CD4-positive, alpha-beta memory T cell (primary cell): ENCODE measurements at regions of chr15 and their contacts with region 1.

Region 1: DNA sequence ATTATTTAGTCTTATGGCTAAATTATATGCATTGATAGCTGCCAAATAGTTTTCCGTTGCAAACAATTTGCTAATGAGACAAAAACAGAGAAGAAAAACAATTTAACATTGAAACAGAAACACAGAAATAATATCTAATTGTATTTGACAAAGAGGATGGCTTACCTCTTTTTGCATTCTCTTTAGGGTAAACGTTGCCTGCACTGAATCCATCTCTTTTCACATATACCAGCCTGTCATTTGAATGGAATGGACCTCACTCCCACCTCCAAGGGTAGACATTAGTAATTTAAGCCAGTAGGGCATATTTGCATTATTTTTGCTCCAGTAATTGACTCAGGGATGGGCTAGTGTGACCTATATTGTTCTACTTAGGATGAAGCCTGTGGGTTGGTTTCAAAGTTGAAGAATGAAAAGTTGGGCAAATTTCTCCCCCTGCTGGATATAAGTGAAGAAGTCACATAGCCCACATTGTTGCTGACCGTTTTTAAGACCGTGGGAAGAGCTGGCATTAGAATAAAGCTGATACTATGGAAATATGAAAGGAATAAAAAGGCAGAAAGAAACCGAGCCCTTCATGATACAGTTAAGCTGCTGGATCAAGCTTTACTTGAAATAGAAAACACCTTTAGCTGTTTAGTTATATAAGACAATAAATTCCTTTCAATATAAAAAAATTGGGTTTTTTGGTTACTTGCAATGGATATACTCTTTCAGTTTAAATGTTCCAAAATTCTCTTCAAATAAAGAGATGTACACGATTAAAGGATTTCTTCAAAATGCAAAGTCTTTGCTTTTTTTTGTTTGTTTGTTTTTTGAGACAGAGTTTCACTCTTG is 26.9 kb downstream of the PIERCE2 start:
- DNase-seq: peak in 4 of 5 donors; percentile 23 to 36 (median 30)
- H3K4me3 ChIP-seq: no peak overlapping the region
- H3K4me3 Mint-ChIP-seq: no peak overlapping the region
- H3K27ac ChIP-seq: no peak overlapping the region
- H3K27ac Mint-ChIP-seq: no peak overlapping the region
- H3K4me1 ChIP-seq: peaks cover 4% of the 10 kb centered on the region
- H3K4me1 Mint-ChIP-seq: peaks cover 3 to 7% (median 5%) of the 10 kb centered on the region in 4 donors
- H3K27me3 ChIP-seq: no peaks in the 10 kb centered on the region
- H3K27me3 Mint-ChIP-seq: peaks cover 0 to 1% of the 10 kb centered on the region in 2 donors

Region 2: DNA sequence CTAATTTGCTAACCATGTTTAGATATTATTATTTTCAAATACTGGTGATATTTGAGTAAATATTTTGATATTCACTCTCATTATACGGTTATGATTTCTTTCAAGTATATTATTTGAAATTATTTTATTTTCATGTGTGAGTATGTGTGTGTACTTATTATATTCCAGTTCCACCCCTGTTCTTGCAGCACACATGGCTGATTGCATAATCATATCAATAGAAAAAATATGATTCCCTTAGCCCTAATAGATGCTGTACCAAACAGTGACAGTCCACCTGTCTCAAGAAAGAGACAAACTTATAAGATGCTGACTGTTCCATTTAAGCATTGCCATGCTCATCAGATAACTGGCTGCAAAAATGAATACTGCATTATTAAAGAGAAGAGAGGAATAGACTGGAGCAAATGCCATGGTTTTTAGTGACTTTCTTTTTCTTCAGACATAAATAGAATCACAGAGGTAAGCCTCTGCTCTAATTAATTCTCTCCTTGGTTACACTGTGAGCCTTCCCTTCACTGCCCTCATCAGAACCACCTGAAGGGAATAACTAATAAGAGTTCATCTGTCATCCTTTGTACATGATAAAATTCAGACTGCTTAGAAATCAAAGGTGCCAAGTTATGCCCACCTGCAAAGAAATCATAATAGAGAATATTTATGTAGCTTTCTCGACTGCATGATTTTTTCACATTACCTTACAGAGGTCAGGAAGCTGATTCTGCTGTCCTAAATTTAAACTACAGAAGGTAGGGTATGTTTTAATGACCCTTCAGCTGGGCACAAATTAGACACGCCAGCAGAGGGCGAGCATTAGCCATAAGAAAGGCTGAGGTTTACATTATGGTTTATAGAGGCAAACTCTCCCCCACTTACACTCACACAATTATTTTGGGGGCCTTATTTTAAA is 1472.6 kb before region 1 on chr15:
- CTCF ChIA-PET with region 1: interaction called, 4 read pairs
- POLR2A ChIA-PET with region 1: no interaction called
- intact Hi-C with region 1: loop called (anchors 5 kb)
- DNase-seq: no peak
- H3K4me3 ChIP-seq: no peak overlapping the region
- H3K4me3 Mint-ChIP-seq: no peak overlapping the region
- H3K27ac ChIP-seq: no peak overlapping the region
- H3K27ac Mint-ChIP-seq: no peak overlapping the region
- H3K4me1 ChIP-seq: no peaks in the 10 kb centered on the region
- H3K4me1 Mint-ChIP-seq: no peaks in the 10 kb centered on the region
- H3K27me3 ChIP-seq: no peaks in the 10 kb centered on the region
- H3K27me3 Mint-ChIP-seq: no peaks in the 10 kb centered on the region

Region 3: GRCh38 chr15:55221090-55222011 is 213.9 kb before region 1 on chr15:
- CTCF ChIA-PET with region 1: interaction called, 20 read pairs
- POLR2A ChIA-PET with region 1: no interaction called
- intact Hi-C with region 1: loop called (anchors 1 kb)
- DNase-seq: peak in 1 of 5 donors; percentile 42
- H3K4me3 ChIP-seq: no peak overlapping the region
- H3K4me3 Mint-ChIP-seq: peak overlapping the region in 6 of 8 donors; percentile 9 to 75 (median 56)
- H3K27ac ChIP-seq: no peak overlapping the region
- H3K27ac Mint-ChIP-seq: peak overlapping the region in 6 of 7 donors; percentile 34 to 77 (median 62)
- H3K4me1 ChIP-seq: peaks cover 57% of the 10 kb centered on the region
- H3K4me1 Mint-ChIP-seq: peaks cover 43 to 73% (median 57%) of the 10 kb centered on the region in 4 donors
- H3K27me3 ChIP-seq: no peaks in the 10 kb centered on the region
- H3K27me3 Mint-ChIP-seq: no peaks in the 10 kb centered on the region

Region 4: DNA sequence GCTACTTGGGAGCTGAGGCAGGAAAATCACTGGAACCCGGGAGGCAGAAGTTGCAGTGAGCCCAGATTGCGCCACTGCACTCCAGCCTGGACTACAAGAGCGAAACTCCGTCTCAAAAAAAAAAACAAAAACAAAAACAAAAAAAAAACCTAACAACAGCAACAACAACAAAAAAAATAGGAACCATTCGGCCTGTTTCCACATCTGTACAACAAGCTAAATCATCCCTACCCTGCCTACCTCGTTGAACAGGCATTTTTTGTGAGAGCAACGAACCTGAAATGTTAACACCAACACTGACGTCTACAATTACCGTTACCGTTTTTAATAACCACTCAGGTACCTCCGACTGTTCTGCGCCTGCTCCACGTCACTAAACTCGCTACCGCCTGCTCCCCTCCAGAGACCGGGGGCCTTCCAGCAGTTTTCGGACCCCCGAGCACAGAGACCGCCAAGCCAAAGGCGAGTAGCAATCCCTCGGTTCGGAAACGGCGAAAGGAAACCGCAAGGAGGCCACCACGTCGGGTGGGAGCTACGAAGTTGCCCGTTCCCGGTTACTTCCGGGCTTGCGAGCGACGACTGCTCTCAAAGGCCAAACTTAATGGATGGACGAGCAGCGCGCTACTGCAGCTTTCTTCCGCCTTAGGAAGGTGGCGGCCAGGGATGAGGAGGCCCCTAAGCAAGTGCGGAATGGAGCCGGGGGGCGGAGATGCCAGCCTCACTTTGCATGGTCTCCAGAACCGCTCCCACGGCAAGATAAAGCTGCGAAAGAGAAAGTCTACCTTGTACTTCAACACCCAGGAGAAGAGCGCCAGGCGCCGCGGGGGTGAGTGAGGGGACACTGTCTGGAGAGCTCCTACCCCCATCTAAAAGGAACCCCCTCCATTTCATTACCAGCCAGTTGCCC is 116.4 kb before region 1 on chr15 and contains the starts of genes PIGB and PIGBOS1:
- CTCF ChIA-PET with region 1: interaction called, 11 read pairs
- POLR2A ChIA-PET with region 1: no interaction called
- intact Hi-C with region 1: no loop called
- DNase-seq: peak; percentile 83 to 88 (median 87)
- H3K4me3 ChIP-seq: peak within 1 kb of the TSS; percentile 98 to 100
- H3K4me3 Mint-ChIP-seq: peak within 1 kb of the TSS; percentile 96 to 100 (median 98)
- H3K27ac ChIP-seq: peak within 1 kb of the TSS; percentile 93
- H3K27ac Mint-ChIP-seq: peak within 1 kb of the TSS; percentile 99 to 100 (median 100)
- H3K4me1 ChIP-seq: peaks cover 61% of the 10 kb centered on the region
- H3K4me1 Mint-ChIP-seq: peaks cover 44 to 82% (median 64%) of the 10 kb centered on the region in 4 donors
- H3K27me3 ChIP-seq: no peaks in the 10 kb centered on the region
- H3K27me3 Mint-ChIP-seq: no peaks in the 10 kb centered on the region
- total RNA-seq, gene PIGB: 26.4 to 28.6 TPM
- total RNA-seq, gene PIGBOS1: 14.1 to 20.3 TPM

Region 5: DNA sequence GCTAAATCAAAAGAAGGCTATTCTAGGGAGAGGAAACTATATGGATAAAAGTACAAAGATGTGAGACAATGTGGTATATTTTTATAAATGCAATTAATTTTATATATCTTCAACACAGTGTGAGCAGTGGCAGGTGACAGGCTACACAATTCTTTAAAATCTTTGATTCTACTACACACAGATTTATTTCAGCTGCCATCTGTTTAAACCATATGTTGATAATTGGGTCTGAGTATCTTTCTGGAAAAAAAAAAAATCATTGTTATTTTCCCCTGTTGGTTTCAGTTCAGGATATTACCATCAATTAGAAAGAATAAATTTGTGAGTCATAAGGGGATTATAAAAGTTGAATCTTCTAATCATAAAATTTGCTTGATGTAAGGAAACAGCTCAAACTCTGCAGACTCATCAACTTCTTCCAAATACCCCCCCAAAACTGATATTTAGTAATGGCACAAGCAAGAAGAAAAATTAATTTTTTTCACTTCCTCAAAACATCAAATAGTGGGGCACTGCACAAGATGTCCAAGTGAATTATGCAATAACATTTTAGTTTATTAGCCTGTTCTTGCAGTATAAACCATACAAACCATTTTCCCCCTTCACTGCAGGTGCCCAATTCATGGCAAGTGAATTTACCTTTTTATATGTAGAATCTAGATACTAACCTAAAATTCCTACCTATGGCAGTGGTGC is 14.9 kb before region 1 on chr15:
- CTCF ChIA-PET with region 1: interaction called, 14 read pairs
- POLR2A ChIA-PET with region 1: no interaction called
- intact Hi-C with region 1: no loop called
- DNase-seq: no peak
- H3K4me3 ChIP-seq: no peak overlapping the region
- H3K4me3 Mint-ChIP-seq: no peak overlapping the region
- H3K27ac ChIP-seq: no peak overlapping the region
- H3K27ac Mint-ChIP-seq: peak overlapping the region in 1 of 7 donors; percentile 19
- H3K4me1 ChIP-seq: no peaks in the 10 kb centered on the region
- H3K4me1 Mint-ChIP-seq: no peaks in the 10 kb centered on the region
- H3K27me3 ChIP-seq: no peaks in the 10 kb centered on the region
- H3K27me3 Mint-ChIP-seq: no peaks in the 10 kb centered on the region

Region 6: DNA sequence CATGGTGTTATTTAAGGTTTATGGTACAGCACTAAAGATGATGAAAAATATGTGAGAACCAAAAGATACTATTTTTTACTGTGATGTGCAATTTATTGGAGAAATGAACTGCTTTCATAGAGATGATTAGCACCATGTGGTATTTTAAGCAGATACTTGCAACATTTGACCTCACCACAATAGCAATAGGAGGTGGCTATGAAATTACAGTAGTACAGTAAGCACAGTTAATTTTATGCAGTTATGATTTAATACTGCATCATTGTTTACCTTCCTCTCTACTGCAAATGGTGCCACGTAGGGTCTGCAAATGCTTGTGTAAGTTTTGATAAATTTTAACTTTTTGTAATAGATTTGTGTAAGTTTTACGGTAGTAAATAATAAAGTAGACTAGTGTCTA is 138.9 kb after region 1 on chr15:
- CTCF ChIA-PET with region 1: no interaction called
- POLR2A ChIA-PET with region 1: no interaction called
- intact Hi-C with region 1: no loop called
- DNase-seq: no peak
- H3K4me3 ChIP-seq: no peak overlapping the region
- H3K4me3 Mint-ChIP-seq: no peak overlapping the region
- H3K27ac ChIP-seq: no peak overlapping the region
- H3K27ac Mint-ChIP-seq: no peak overlapping the region
- H3K4me1 ChIP-seq: no peaks in the 10 kb centered on the region
- H3K4me1 Mint-ChIP-seq: no peaks in the 10 kb centered on the region
- H3K27me3 ChIP-seq: no peaks in the 10 kb centered on the region
- H3K27me3 Mint-ChIP-seq: peaks cover 18 to 27% of the 10 kb centered on the region in 2 donors

Region 7: DNA sequence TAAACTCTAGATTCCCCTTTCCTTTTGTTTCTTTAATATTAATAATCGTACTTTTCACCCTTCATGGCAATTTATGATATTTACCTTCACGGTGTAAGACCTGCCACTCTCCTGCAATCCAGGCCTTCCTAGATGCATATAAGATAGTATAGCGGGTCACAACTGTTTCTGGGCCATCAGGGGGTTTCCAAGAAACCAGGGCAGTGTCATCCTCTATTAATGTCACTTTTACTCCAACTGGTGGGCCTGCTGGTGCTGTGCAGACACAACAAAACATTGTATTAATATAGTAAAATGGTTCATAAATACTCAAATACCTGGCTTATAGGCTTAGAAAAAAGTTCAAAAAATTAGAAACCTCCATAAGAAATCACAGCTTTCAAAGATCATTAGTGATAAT is 201.9 kb after region 1 on chr15:
- CTCF ChIA-PET with region 1: no interaction called
- POLR2A ChIA-PET with region 1: no interaction called
- intact Hi-C with region 1: no loop called
- DNase-seq: no peak
- H3K4me3 ChIP-seq: no peak overlapping the region
- H3K4me3 Mint-ChIP-seq: no peak overlapping the region
- H3K27ac ChIP-seq: no peak overlapping the region
- H3K27ac Mint-ChIP-seq: no peak overlapping the region
- H3K4me1 ChIP-seq: no peaks in the 10 kb centered on the region
- H3K4me1 Mint-ChIP-seq: no peaks in the 10 kb centered on the region
- H3K27me3 ChIP-seq: no peaks in the 10 kb centered on the region
- H3K27me3 Mint-ChIP-seq: peaks cover 3 to 4% of the 10 kb centered on the region in 2 donors